GM10248 (cell line): ENCODE measurements at regions of chr19 and their contacts with region 1.

Region 1: GRCh38 chr19:3665681-3666544 is 34.4 kb downstream of the PIP5K1C start:
- DNase-seq: peak; percentile 88
- CTCF ChIP-seq: peak; percentile 91

Region 2: GRCh38 chr19:3655402-3656072 is 10.4 kb before region 1 on chr19:
- CTCF ChIA-PET with region 1: interaction called, 17 read pairs
- POLR2A ChIA-PET with region 1: no interaction called
- DNase-seq: no peak
- CTCF ChIP-seq: no peak

Region 3: GRCh38 chr19:3692141-3693024 is 26.5 kb after region 1 on chr19:
- CTCF ChIA-PET with region 1: interaction called, 148 read pairs
- POLR2A ChIA-PET with region 1: no interaction called
- DNase-seq: no peak
- CTCF ChIP-seq: peak; percentile 50

Region 4: GRCh38 chr19:3700221-3701032 is 34.5 kb after region 1 on chr19 and contains the start of gene PIP5K1C:
- CTCF ChIA-PET with region 1: interaction called, 148 read pairs
- POLR2A ChIA-PET with region 1: no interaction called
- DNase-seq: peak; percentile 97
- CTCF ChIP-seq: peak; percentile 84